Endothelial cell of umbilical vein (primary cell): ENCODE measurements at regions of chr1 and their contacts with region 1.

Region 1: DNA sequence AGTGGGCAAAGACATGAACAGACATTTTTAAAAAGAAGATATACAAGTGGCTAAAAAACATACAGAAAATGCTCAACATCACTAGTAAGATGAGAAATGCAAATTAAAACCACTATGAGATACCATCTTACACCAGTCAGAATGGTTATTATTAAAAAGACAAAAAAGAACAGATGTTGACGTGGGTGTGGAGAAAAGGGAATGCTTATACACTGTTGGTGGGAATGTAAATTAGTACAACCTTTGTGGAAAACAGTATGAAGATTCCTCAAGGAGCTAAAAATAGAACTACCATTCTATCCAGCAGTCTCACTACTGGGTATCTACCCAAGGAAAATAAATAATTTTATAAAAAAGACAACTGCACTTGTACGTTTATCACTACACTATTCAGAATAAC is 73.9 kb downstream of the EBNA1BP2 start:
- DNase-seq: no peak
- H3K4me3 ChIP-seq: no peak overlapping the region
- H3K27ac ChIP-seq: no peak overlapping the region
- H3K4me1 ChIP-seq: no peaks in the 10 kb centered on the region
- H3K27me3 ChIP-seq: peaks cover 4 to 6% of the 10 kb centered on the region in 2 experiments
- CTCF ChIP-seq: no peak
- POLR2A ChIP-seq: no peak

Region 2: GRCh38 chr1:42766741-42767509 is 331.3 kb before region 1 on chr1 and contains the starts of genes C1orf50 and P3H1:
- CTCF ChIA-PET with region 1: no interaction called
- POLR2A ChIA-PET with region 1: no interaction called
- dilution Hi-C with region 1: no loop called
- intact Hi-C with region 1: no loop called
- DNase-seq: peak; percentile 100
- H3K4me3 ChIP-seq: peak within 1 kb of the TSS; percentile 65 to 91 (median 90)
- H3K27ac ChIP-seq: peak within 1 kb of the TSS; percentile 62
- H3K4me1 ChIP-seq: peaks cover 20% of the 10 kb centered on the region
- H3K27me3 ChIP-seq: no peaks in the 10 kb centered on the region
- CTCF ChIP-seq: no peak
- POLR2A ChIP-seq: peak; percentile 92
- total RNA-seq, gene C1orf50: 4.0 and 7.4 TPM in 2 replicates
- total RNA-seq, gene P3H1: 136 and 146 TPM in 2 replicates

Region 3: GRCh38 chr1:43035821-43036741 is 62.1 kb before region 1 on chr1:
- CTCF ChIA-PET with region 1: no interaction called
- POLR2A ChIA-PET with region 1: no interaction called
- dilution Hi-C with region 1: no loop called
- intact Hi-C with region 1: no loop called
- DNase-seq: no peak
- H3K4me3 ChIP-seq: no peak overlapping the region
- H3K27ac ChIP-seq: no peak overlapping the region
- H3K4me1 ChIP-seq: no peaks in the 10 kb centered on the region
- H3K27me3 ChIP-seq: no peaks in the 10 kb centered on the region
- CTCF ChIP-seq: no peak
- POLR2A ChIP-seq: no peak

Region 4: GRCh38 chr1:43082740-43083139 is 15.5 kb before region 1 on chr1:
- CTCF ChIA-PET with region 1: interaction called, 10 read pairs
- POLR2A ChIA-PET with region 1: no interaction called
- dilution Hi-C with region 1: no loop called
- intact Hi-C with region 1: no loop called
- DNase-seq: no peak
- H3K4me3 ChIP-seq: no peak overlapping the region
- H3K27ac ChIP-seq: no peak overlapping the region
- H3K4me1 ChIP-seq: no peaks in the 10 kb centered on the region
- H3K27me3 ChIP-seq: no peaks in the 10 kb centered on the region
- CTCF ChIP-seq: no peak
- POLR2A ChIP-seq: no peak